Colonic mucosa (tissue), 4 donors: ENCODE measurements at regions of chr18 and their contacts with region 1.

Region 1: GRCh38 chr18:74597662-74598349 is at the start of gene ZNF407:
- DNase-seq: peak; percentile 93
- H3K4me3 ChIP-seq: peak within 1 kb of the TSS; percentile 94
- H3K27ac ChIP-seq: peak within 1 kb of the TSS; percentile 96
- H3K4me1 ChIP-seq: peaks cover 7% of the 10 kb centered on the region
- H3K27me3 ChIP-seq: no peaks in the 10 kb centered on the region
- CTCF ChIP-seq: no peak
- total RNA-seq, gene ZNF407: 8.1 to 13.1 TPM

Region 2: GRCh38 chr18:74495581-74496507 is 102.0 kb before region 1 on chr18 and contains the start of gene CNDP2:
- intact Hi-C with region 1: loop called (anchors 5 kb)
- DNase-seq: peak; percentile 100
- H3K4me3 ChIP-seq: peak within 1 kb of the TSS; percentile 96
- H3K27ac ChIP-seq: peak within 1 kb of the TSS; percentile 91
- H3K4me1 ChIP-seq: peaks cover 20% of the 10 kb centered on the region
- H3K27me3 ChIP-seq: no peaks in the 10 kb centered on the region
- CTCF ChIP-seq: no peak
- total RNA-seq, gene CNDP2: 206 to 261 TPM